ENCODE measurements at regions of chr4 and their contacts with region 1.

Region 1: GRCh38 chr4:52983563-52984303 is 121.6 kb downstream of the RASL11B start:
- DNase-seq: no peak
- H3K4me3 ChIP-seq: no peak overlapping the region
- H3K27ac ChIP-seq: no peak overlapping the region
- H3K4me1 ChIP-seq: no peaks in the 10 kb centered on the region; a peak in 1 of 7 replicates
- H3K27me3 ChIP-seq: no peaks in the 10 kb centered on the region
- CTCF ChIP-seq: peak in 2 of 3 experiments; percentile 45 to 52; a peak in 2 of 4 replicates
- EP300 ChIP-seq: no peak
- POLR2A ChIP-seq: no peak
- RAD21 ChIP-seq: peak; percentile 76 to 78

Region 2: DNA sequence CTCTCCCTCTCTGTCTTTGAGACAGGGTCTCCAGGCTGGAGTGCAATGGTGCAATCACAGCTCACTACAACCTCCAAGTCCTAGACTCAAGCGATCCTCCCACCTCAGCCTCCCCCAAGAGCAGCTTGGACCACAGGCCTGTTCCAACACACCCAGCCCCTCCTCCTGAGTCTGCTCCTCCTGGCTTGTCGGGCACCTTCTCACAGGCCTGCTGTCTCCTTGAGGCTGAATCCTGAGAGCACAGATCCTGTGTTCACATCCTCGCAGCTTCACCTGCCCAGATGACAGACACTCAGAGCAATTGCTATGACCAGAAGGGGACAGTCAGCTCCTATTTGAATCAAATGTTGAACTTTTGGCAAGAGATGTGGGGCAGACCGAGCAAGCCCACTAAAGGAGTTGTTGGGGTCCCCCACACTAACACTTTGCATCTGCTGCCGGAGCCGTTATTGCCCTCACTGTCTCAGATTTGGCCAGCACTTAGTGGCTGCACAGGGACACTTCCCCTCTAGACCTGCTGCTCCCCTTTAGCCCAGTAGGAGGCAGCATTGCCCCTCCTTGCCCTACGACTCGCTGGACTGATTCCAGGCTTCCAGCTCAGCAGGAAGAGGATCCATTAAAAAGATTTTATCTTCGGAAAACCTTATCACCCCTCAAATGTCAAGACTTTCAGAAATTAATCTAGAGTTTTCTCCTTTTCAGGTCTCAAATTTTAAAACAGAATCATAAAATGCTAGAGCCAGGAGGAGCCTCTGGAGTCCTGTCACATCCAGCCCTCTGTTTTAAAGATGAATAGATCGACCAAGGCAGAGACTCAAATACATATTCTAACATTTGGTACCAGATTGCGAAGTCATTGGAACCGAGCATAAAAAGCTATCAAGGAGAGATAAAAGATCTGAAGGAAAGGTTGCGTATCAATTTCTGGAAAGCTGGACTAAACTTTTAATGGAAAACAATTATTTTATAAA is 438.3 kb before region 1 on chr4:
- CTCF ChIA-PET with region 1: interaction called, 76 read pairs
- POLR2A ChIA-PET with region 1: no interaction called
- DNase-seq: peak; percentile 39 to 92
- H3K4me3 ChIP-seq: no peak overlapping the region
- H3K27ac ChIP-seq: no peak overlapping the region
- H3K4me1 ChIP-seq: peaks cover 0 to 3% (median 0%) of the 10 kb centered on the region in 4 experiments; a peak in 1 of 7 replicates
- H3K27me3 ChIP-seq: no peaks in the 10 kb centered on the region
- CTCF ChIP-seq: peak; percentile 84 to 97 (median 97)
- EP300 ChIP-seq: no peak
- POLR2A ChIP-seq: no peak
- RAD21 ChIP-seq: peak; percentile 96 to 97

Region 3: GRCh38 chr4:52837726-52838558 is 145.8 kb before region 1 on chr4:
- CTCF ChIA-PET with region 1: interaction called, 10 read pairs
- POLR2A ChIA-PET with region 1: interaction called, 3 read pairs
- DNase-seq: no peak
- H3K4me3 ChIP-seq: no peak overlapping the region
- H3K27ac ChIP-seq: no peak overlapping the region
- H3K4me1 ChIP-seq: peaks cover 7 to 25% (median 17%) of the 10 kb centered on the region in 4 experiments
- H3K27me3 ChIP-seq: no peaks in the 10 kb centered on the region
- CTCF ChIP-seq: no peak
- EP300 ChIP-seq: no peak
- POLR2A ChIP-seq: no peak
- RAD21 ChIP-seq: no peak

Region 4: DNA sequence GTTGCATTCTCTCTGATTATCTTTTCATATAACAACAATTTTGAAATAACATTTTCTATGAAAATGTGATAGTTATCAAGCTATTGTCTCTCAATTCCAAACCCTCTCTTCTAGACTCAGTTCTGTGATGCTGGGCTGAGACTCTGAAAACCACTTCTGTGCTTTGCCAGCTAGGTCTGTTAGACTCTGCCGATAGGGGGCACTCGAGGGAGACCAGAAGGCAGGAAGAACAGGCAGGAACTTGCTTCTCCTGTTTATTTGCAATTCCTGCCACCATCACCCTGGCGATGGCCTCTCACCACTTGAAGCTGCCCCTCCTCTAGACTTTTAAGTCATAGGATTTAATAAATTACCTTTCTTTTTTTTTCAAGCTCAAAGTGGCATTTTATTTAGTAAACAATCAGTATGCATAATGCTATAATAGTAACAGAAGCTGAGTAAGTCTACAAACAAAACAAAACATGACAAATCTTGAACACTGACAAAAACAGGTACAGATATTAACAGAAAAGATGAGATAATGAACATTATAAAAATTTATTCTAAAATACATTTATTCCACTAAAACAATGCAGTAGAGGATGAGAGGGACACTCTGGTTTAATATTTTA is 71.9 kb before region 1 on chr4:
- CTCF ChIA-PET with region 1: interaction called, 10 read pairs
- POLR2A ChIA-PET with region 1: no interaction called
- DNase-seq: peak; percentile 59 to 95
- H3K4me3 ChIP-seq: no peak overlapping the region
- H3K27ac ChIP-seq: no peak overlapping the region
- H3K4me1 ChIP-seq: peaks cover 0 to 3% (median 0%) of the 10 kb centered on the region in 4 experiments; a peak in 2 of 7 replicates
- H3K27me3 ChIP-seq: no peaks in the 10 kb centered on the region
- CTCF ChIP-seq: peak; percentile 74 to 93 (median 77)
- EP300 ChIP-seq: no peak
- POLR2A ChIP-seq: no peak
- RAD21 ChIP-seq: peak; percentile 71 to 80

Region 5: GRCh38 chr4:53128706-53129357 is 145.1 kb after region 1 on chr4:
- CTCF ChIA-PET with region 1: no interaction called
- POLR2A ChIA-PET with region 1: no interaction called
- DNase-seq: no peak
- H3K4me3 ChIP-seq: no peak overlapping the region
- H3K27ac ChIP-seq: no peak overlapping the region
- H3K4me1 ChIP-seq: no peaks in the 10 kb centered on the region; a peak in 1 of 7 replicates
- H3K27me3 ChIP-seq: peaks cover 0 to 1% (median 0%) of the 10 kb centered on the region in 4 experiments; a peak in 1 of 7 replicates
- CTCF ChIP-seq: no peak
- EP300 ChIP-seq: no peak
- POLR2A ChIP-seq: no peak
- RAD21 ChIP-seq: no peak